Sciatic nerve (tissue), 2 donors: ENCODE measurements at regions of chr7 and their contacts with region 1.

Region 1: DNA sequence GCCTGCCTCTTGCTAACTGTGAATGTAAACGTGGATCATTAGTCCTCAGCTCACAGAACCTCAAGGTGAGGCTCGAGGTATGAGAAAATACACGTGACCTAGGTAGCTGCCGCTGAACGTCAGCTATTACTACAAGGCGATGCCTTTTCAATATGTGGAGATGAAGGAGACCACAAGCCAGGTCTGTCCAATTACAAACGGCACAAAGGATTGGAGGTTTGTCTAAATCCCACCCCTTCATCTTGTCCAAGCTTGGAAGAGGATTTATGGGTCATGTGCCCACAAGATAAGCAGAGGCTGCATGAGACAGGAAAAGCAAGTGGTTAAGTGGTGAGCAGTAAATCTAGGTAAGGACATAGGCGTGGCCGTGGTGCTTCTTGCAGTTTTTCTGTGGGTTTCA is 3.4 kb downstream of the H2BK1 start:
- DNase-seq: no peak
- ATAC-seq: no peak

Region 2: GRCh38 chr7:151095123-151095797 is 111.7 kb before region 1 on chr7:
- intact Hi-C with region 1: no loop called
- DNase-seq: no peak
- ATAC-seq: no peak

Region 3: GRCh38 chr7:151107882-151108281 is 99.0 kb before region 1 on chr7:
- intact Hi-C with region 1: no loop called
- DNase-seq: no peak
- ATAC-seq: no peak

Region 4: DNA sequence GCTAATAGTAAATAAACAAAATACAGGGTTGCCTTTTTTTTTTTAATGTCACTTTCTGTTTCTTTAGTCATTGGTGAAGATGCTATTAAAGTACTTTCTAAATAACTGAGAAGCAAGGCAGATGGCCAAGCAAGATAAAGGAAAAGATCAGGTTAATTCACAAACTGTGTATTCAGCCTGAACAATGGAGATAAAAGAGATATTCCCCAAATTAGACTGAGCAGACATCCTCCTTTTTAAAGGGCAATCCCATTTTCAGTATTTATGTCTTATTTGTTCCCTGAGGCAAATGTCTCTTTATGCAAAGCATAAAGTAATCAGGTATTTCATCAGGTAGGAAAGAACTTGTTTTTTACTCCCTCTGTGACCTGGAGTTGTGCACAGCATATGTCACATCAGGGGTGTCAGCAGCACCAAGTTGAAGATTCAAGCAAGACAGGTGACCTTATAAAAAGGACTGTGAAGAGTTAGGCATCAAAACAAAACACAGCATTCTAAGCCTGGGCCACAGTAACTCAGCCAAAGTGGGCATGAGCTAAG is 1492.3 kb after region 1 on chr7:
- intact Hi-C with region 1: loop called (anchors 5 kb)
- DNase-seq: no peak
- ATAC-seq: no peak